ENCODE measurements at regions of chr15 and their contacts with region 1.

Region 1: GRCh38 chr15:67863442-67863987 is 23.7 kb upstream of the RNU6-1 start:
- DNase-seq: peak; percentile 95 to 96
- H3K4me3 ChIP-seq: peak overlapping the region; percentile 23
- H3K4me1 ChIP-seq: peaks cover 19% of the 10 kb centered on the region
- H3K27me3 ChIP-seq: no peaks in the 10 kb centered on the region

Region 2: GRCh38 chr15:68163191-68163590 is 299.7 kb after region 1 on chr15:
- in situ Hi-C with region 1: loop called (anchors 5 kb)
- DNase-seq: no peak
- H3K4me3 ChIP-seq: no peak overlapping the region
- H3K4me1 ChIP-seq: peaks cover 5% of the 10 kb centered on the region
- H3K27me3 ChIP-seq: no peaks in the 10 kb centered on the region

Region 3: GRCh38 chr15:68469162-68470048 is 605.9 kb after region 1 on chr15:
- in situ Hi-C with region 1: no loop called
- DNase-seq: no peak
- H3K4me3 ChIP-seq: no peak overlapping the region
- H3K4me1 ChIP-seq: no peaks in the 10 kb centered on the region
- H3K27me3 ChIP-seq: peaks cover 47% of the 10 kb centered on the region

Measured in HAP-1 (cell line).